Transverse colon (tissue), 4 donors: ENCODE measurements at regions of chr5 and their contacts with region 1.

Region 1: DNA sequence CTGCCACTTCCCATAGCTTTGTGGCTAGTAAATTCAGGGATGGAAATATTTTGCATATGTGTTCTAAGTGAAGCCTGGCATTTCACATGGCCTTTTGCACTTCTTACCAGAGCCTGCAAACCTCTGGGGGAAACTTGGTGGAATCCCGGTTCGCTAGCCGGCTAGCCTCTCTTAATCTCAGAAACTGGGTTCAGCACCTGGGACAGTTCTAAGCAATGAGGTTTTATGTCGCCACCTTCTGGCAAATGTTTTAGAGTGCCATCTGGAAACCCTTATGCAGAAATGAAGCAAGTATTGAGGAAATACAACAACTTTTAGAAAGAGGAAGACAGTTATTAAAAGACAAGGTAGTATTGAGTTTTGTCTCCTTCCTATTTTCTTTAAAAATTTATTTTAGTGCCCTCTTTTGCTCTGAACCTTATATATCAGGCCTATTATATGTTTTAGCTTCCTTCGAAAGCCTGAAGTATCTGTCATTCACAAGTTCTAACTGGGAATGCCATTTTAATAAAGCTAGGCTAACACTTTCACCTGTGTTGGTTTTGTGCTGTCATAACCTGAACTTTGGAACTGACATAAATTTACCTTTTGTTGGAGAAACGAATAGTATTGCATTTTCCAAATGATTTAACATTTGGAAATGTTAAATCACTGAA is 963 bp upstream of the HTR1A start:
- DNase-seq: peak; percentile 23
- H3K4me3 ChIP-seq: no peak overlapping the region
- H3K27ac ChIP-seq: no peak overlapping the region
- H3K4me1 ChIP-seq: no peaks in the 10 kb centered on the region
- H3K27me3 ChIP-seq: peaks cover 42% of the 10 kb centered on the region
- CTCF ChIP-seq: peak; percentile 27 to 48 (median 39)
- EP300 ChIP-seq: no peak
- POLR2A ChIP-seq: no peak

Region 2: GRCh38 chr5:63401436-63402046 is 561.7 kb before region 1 on chr5:
- in situ Hi-C with region 1: loop called in 3 of 4 experiments (anchors 10 to 25 kb)
- intact Hi-C with region 1: no loop called
- DNase-seq: peak; percentile 41
- H3K4me3 ChIP-seq: no peak overlapping the region
- H3K27ac ChIP-seq: no peak overlapping the region
- H3K4me1 ChIP-seq: no peaks in the 10 kb centered on the region
- H3K27me3 ChIP-seq: no peaks in the 10 kb centered on the region
- CTCF ChIP-seq: peak; percentile 40 to 55 (median 52)
- EP300 ChIP-seq: no peak
- POLR2A ChIP-seq: no peak

Region 3: GRCh38 chr5:63894690-63895089 is 68.5 kb before region 1 on chr5:
- in situ Hi-C with region 1: no loop called
- intact Hi-C with region 1: no loop called
- DNase-seq: no peak
- H3K4me3 ChIP-seq: no peak overlapping the region
- H3K27ac ChIP-seq: no peak overlapping the region
- H3K4me1 ChIP-seq: no peaks in the 10 kb centered on the region
- H3K27me3 ChIP-seq: no peaks in the 10 kb centered on the region
- CTCF ChIP-seq: no peak
- EP300 ChIP-seq: no peak
- POLR2A ChIP-seq: no peak